BJ (cell line): ENCODE measurements at regions of chrX and their contacts with region 1.

Region 1: GRCh38 chrX:130916636-130917422 is 13.8 kb upstream of the ENOX2 start:
- DNase-seq: no peak
- H3K4me3 ChIP-seq: no peak overlapping the region
- H3K27me3 ChIP-seq: no peaks in the 10 kb centered on the region
- CTCF ChIP-seq: peak; percentile 64

Region 2: GRCh38 chrX:130330706-130331105 is 586.1 kb before region 1 on chrX:
- CTCF ChIA-PET with region 1: interaction called, 15 read pairs
- POLR2A ChIA-PET with region 1: no interaction called
- DNase-seq: no peak
- H3K4me3 ChIP-seq: no peak overlapping the region
- H3K27me3 ChIP-seq: no peaks in the 10 kb centered on the region
- CTCF ChIP-seq: peak; percentile 60

Region 3: GRCh38 chrX:130393451-130394074 is 523.3 kb before region 1 on chrX:
- CTCF ChIA-PET with region 1: interaction called, 94 read pairs
- POLR2A ChIA-PET with region 1: interaction called, 3 read pairs
- DNase-seq: no peak
- H3K4me3 ChIP-seq: no peak overlapping the region
- H3K27me3 ChIP-seq: no peaks in the 10 kb centered on the region
- CTCF ChIP-seq: peak; percentile 75

Region 4: GRCh38 chrX:130539721-130540321 is 377.0 kb before region 1 on chrX:
- CTCF ChIA-PET with region 1: interaction called, 42 read pairs
- POLR2A ChIA-PET with region 1: no interaction called
- DNase-seq: no peak
- H3K4me3 ChIP-seq: no peak overlapping the region
- H3K27me3 ChIP-seq: no peaks in the 10 kb centered on the region
- CTCF ChIP-seq: peak; percentile 69

Region 5: GRCh38 chrX:130575831-130576389 is 340.9 kb before region 1 on chrX:
- CTCF ChIA-PET with region 1: interaction called, 16 read pairs
- POLR2A ChIA-PET with region 1: no interaction called
- DNase-seq: no peak
- H3K4me3 ChIP-seq: no peak overlapping the region
- H3K27me3 ChIP-seq: no peaks in the 10 kb centered on the region
- CTCF ChIP-seq: peak; percentile 77

Region 6: DNA sequence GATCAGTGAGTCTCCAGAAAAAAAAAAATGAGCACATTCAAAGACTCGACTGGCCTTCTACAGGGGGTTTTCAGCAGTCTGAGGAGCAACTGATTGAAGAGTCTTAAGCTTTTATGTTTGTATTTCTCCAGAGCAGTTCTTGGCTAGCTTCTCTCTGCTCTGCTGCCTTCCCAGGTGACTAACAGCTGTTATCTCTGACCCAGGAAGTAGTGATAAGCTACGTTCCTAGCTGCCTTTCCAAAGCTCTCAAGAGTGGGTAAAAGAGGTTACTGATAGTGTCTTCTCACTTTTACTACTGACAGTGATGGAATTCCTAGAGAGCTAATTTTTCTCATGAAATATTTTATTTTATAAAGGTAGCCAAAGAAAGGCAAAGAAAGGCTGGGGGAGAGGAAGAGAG is 80.4 kb before region 1 on chrX:
- CTCF ChIA-PET with region 1: no interaction called
- POLR2A ChIA-PET with region 1: no interaction called
- DNase-seq: no peak
- H3K4me3 ChIP-seq: no peak overlapping the region
- H3K27me3 ChIP-seq: no peaks in the 10 kb centered on the region
- CTCF ChIP-seq: no peak

Region 7: GRCh38 chrX:131146702-131147101 is 229.9 kb after region 1 on chrX:
- CTCF ChIA-PET with region 1: no interaction called
- POLR2A ChIA-PET with region 1: no interaction called
- DNase-seq: no peak
- H3K4me3 ChIP-seq: no peak overlapping the region
- H3K27me3 ChIP-seq: no peaks in the 10 kb centered on the region
- CTCF ChIP-seq: no peak